ENCODE measurements at regions of chr22 and their contacts with region 1.

Region 1: GRCh38 chr22:50236731-50237409 is 8.0 kb downstream of the TUBGCP6 start:
- DNase-seq: no peak
- CTCF ChIP-seq: peak; percentile 30

Region 2: DNA sequence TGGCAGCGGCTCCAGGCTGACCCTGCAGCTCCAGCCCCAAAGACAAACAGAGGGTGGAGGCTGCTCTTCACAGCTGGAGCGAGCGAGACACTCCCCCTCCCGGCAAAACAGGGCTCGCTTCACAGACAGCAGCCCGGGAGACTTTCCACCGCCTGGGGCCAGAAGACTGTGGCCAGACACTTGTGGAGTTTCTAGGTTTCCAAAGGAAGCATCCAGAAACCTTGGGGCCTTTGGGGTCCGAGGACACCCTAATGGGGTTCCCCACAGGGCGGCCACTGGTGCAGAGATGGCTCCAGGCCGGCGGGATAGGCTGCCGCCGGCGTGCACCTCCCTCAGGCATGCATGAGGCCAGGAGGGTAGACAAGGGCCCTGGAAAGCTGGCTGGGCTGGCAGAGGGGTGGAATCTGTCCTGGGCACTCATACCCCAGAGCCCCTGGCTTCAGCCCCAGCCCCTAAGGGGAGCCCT is 224.1 kb before region 1 on chr22 and contains the start of gene IL17REL:
- CTCF ChIA-PET with region 1: no interaction called
- POLR2A ChIA-PET with region 1: no interaction called
- DNase-seq: no peak
- CTCF ChIP-seq: no peak

Region 3: DNA sequence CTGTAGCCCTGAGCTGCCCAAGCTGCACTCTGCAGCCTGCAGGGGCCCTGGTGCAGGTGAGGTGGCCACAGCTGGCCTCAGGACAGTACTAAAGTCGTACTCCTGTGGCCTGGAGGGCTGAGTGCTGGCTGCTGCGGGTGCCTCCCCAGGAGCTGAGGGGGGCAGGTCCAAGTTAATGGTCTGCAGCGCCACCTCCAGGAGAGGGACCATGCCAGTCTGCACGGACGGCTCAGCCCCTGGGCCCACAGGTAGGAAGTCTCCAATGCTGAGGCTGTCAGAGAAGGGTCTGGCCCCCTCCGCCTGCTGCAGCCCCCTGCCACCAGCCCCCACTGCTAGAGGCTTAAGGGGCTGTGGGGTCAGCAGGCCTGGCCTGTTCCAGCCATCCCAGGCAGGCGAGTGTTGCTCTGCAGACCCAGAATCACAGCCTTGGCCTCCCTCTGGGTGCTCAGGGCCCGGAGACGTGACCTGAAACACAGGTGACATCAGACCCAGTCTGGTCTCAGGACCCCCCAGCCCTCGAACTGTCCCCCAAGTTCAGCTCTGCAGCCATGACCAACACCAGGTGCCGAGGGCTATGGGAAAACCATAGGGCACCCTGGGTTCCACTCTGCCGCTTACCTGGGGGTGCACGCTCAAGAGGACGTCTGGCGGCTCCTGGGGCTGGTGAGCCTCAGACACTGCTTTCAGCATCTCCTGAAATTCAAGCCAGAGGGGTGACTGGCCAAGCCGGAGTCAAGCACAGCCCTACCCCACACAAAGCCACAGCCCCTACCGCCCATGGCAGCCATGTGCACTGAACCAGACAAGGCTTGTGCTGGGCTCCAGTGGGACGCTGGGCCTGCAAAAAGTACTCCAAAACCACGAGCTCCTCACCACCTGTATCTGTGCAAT is 15.2 kb before region 1 on chr22:
- CTCF ChIA-PET with region 1: interaction called, 15 read pairs
- POLR2A ChIA-PET with region 1: no interaction called
- DNase-seq: no peak
- CTCF ChIP-seq: no peak